ENCODE measurements at regions of chr5 and their contacts with region 1.

Region 1: GRCh38 chr5:78320401-78320800 is 25.9 kb upstream of the AP3B1 start:
- DNase-seq: peak; percentile 46
- H3K4me3 Mint-ChIP-seq: no peak overlapping the region
- H3K27ac Mint-ChIP-seq: no peak overlapping the region
- H3K4me1 Mint-ChIP-seq: peaks cover 6% of the 10 kb centered on the region
- H3K27me3 Mint-ChIP-seq: no peaks in the 10 kb centered on the region
- CTCF ChIP-seq: peak; percentile 70

Region 2: DNA sequence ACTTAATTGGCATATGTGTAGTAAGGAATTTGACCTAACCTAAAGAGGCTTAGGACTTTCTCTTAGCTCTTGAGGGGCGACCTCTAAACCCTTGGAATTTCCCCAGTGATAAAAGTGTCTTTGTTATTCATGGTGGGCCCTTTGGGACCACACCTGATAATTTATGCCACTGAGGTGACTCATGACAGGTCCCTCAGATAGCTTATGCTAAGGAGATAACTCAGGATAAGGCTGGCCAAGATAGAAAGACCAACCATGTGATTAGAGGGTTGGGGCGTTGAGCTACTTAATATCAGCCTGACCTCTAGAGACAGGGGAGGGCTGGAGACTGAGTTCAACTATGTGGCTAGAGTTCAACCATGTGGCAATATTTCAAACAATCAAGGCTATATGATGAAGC is 244.1 kb before region 1 on chr5:
- CTCF ChIA-PET with region 1: no interaction called
- POLR2A ChIA-PET with region 1: no interaction called
- intact Hi-C with region 1: no loop called
- DNase-seq: no peak
- H3K4me3 Mint-ChIP-seq: no peak overlapping the region
- H3K27ac Mint-ChIP-seq: no peak overlapping the region
- H3K4me1 Mint-ChIP-seq: no peaks in the 10 kb centered on the region
- H3K27me3 Mint-ChIP-seq: no peaks in the 10 kb centered on the region
- CTCF ChIP-seq: no peak

Region 3: GRCh38 chr5:78467752-78468357 is 147.5 kb after region 1 on chr5:
- CTCF ChIA-PET with region 1: interaction called, 8 read pairs
- POLR2A ChIA-PET with region 1: interaction called, 4 read pairs
- intact Hi-C with region 1: loop called (anchors 2 kb)
- DNase-seq: peak; percentile 50
- H3K4me3 Mint-ChIP-seq: no peak overlapping the region
- H3K27ac Mint-ChIP-seq: no peak overlapping the region
- H3K4me1 Mint-ChIP-seq: peaks cover 5% of the 10 kb centered on the region
- H3K27me3 Mint-ChIP-seq: no peaks in the 10 kb centered on the region
- CTCF ChIP-seq: peak; percentile 70

Region 4: DNA sequence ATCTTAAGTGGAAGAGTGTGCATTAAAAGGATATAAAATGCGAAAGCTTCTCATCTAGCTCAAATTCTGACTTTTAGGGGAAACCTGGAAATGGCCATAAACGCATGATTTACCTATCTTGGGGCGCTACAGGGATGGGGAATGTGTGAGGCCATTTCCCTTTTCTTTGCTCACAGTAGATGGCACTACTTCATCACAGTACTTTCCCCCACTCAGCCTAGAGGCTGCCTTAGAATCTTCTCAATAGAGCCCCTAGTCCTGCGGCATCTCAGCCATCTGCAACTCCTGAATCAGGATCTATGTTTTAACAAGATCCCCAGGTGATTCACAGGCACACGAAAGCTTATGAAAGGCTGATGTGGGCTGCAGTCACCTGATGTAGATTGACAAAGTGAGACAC is 217.4 kb after region 1 on chr5:
- CTCF ChIA-PET with region 1: interaction called, 5 read pairs
- POLR2A ChIA-PET with region 1: no interaction called
- intact Hi-C with region 1: loop called (anchors 10 kb)
- DNase-seq: peak; percentile 45
- H3K4me3 Mint-ChIP-seq: no peak overlapping the region
- H3K27ac Mint-ChIP-seq: no peak overlapping the region
- H3K4me1 Mint-ChIP-seq: peaks cover 12% of the 10 kb centered on the region
- H3K27me3 Mint-ChIP-seq: no peaks in the 10 kb centered on the region
- CTCF ChIP-seq: peak; percentile 27

Region 5: GRCh38 chr5:78899922-78900362 is 579.5 kb after region 1 on chr5:
- CTCF ChIA-PET with region 1: no interaction called
- POLR2A ChIA-PET with region 1: no interaction called
- intact Hi-C with region 1: loop called (anchors 5 kb)
- DNase-seq: peak; percentile 71
- H3K4me3 Mint-ChIP-seq: no peak overlapping the region
- H3K27ac Mint-ChIP-seq: no peak overlapping the region
- H3K4me1 Mint-ChIP-seq: no peaks in the 10 kb centered on the region
- H3K27me3 Mint-ChIP-seq: no peaks in the 10 kb centered on the region
- CTCF ChIP-seq: peak; percentile 68

Measured in MCF 10A (cell line).